Activated naive CD4-positive, alpha-beta T cell treated with anti-CD3 and anti-CD28 coated beads for 36 hours (primary cell): ENCODE measurements at regions of chr6 and their contacts with region 1.

Region 1: GRCh38 chr6:17584241-17584803 is 15.8 kb upstream of the FAM8A1 start:
- DNase-seq: peak; percentile 38
- H3K4me3 Mint-ChIP-seq: no peak overlapping the region
- H3K27ac Mint-ChIP-seq: no peak overlapping the region
- H3K4me1 Mint-ChIP-seq: peaks cover 6% of the 10 kb centered on the region
- H3K27me3 Mint-ChIP-seq: peaks cover 5% of the 10 kb centered on the region

Region 2: DNA sequence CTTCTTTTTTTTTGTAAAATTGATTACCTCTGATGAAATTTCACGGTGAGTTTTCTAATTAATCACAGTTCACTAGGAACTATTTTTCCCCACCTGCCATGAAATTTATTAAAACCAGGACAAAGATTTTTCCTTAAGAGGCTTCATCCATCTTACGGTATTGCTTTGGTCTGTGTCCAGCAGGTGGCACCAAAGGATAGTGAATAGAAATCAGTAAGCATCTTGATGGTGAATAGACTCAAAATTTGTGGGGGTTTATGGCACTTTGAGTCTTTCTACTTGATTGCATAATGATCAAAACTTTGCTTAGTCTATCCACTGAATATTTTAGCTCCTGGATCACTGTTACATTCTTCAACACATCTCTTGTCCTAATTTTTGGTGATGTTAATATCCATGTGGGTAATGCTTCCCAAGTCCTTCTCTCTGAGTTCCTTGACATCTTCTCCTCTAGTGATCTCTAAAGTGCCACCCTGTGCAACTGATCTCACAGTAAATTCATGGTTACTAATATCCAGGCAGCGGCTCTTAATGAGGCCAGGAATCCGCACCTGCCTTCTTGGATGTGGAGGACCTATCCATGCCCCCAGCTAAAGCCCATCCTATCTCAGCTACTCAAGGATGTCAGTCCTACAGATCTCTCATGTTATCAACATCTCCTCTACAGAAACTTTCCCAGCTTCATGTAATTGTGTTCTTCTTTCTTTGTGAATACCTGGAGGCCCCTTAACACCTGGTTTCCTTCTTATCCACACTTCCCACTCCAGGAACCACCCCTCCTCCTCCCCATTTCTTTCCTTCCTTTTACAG is 428.0 kb before region 1 on chr6:
- CTCF ChIA-PET with region 1: interaction called, 5 read pairs
- intact Hi-C with region 1: loop called (anchors 1 kb)
- DNase-seq: peak; percentile 76
- H3K4me3 Mint-ChIP-seq: no peak overlapping the region
- H3K27ac Mint-ChIP-seq: no peak overlapping the region
- H3K4me1 Mint-ChIP-seq: no peaks in the 10 kb centered on the region
- H3K27me3 Mint-ChIP-seq: peaks cover 9% of the 10 kb centered on the region

Region 3: GRCh38 chr6:17469006-17469832 is 115.1 kb before region 1 on chr6:
- CTCF ChIA-PET with region 1: no interaction called
- intact Hi-C with region 1: loop called (anchors 1 kb)
- DNase-seq: no peak
- H3K4me3 Mint-ChIP-seq: no peak overlapping the region
- H3K27ac Mint-ChIP-seq: no peak overlapping the region
- H3K4me1 Mint-ChIP-seq: no peaks in the 10 kb centered on the region
- H3K27me3 Mint-ChIP-seq: peaks cover 6% of the 10 kb centered on the region

Region 4: GRCh38 chr6:17803409-17803808 is 219.1 kb after region 1 on chr6:
- CTCF ChIA-PET with region 1: interaction called, 19 read pairs
- intact Hi-C with region 1: loop called (anchors 1 kb)
- DNase-seq: no peak
- H3K4me3 Mint-ChIP-seq: no peak overlapping the region
- H3K27ac Mint-ChIP-seq: no peak overlapping the region
- H3K4me1 Mint-ChIP-seq: no peaks in the 10 kb centered on the region
- H3K27me3 Mint-ChIP-seq: peaks cover 8% of the 10 kb centered on the region

Region 5: GRCh38 chr6:17820055-17820454 is 235.7 kb after region 1 on chr6:
- CTCF ChIA-PET with region 1: interaction called, 14 read pairs
- intact Hi-C with region 1: loop called (anchors 1 kb)
- DNase-seq: no peak
- H3K4me3 Mint-ChIP-seq: no peak overlapping the region
- H3K27ac Mint-ChIP-seq: no peak overlapping the region
- H3K4me1 Mint-ChIP-seq: no peaks in the 10 kb centered on the region
- H3K27me3 Mint-ChIP-seq: peaks cover 7% of the 10 kb centered on the region

Region 6: GRCh38 chr6:18503593-18504231 is 919.4 kb after region 1 on chr6:
- CTCF ChIA-PET with region 1: no interaction called
- intact Hi-C with region 1: loop called (anchors 5 kb)
- DNase-seq: peak; percentile 56
- H3K4me3 Mint-ChIP-seq: no peak overlapping the region
- H3K27ac Mint-ChIP-seq: no peak overlapping the region
- H3K4me1 Mint-ChIP-seq: no peaks in the 10 kb centered on the region
- H3K27me3 Mint-ChIP-seq: no peaks in the 10 kb centered on the region